ENCODE measurements at regions of chr16 and their contacts with region 1.

Region 1: DNA sequence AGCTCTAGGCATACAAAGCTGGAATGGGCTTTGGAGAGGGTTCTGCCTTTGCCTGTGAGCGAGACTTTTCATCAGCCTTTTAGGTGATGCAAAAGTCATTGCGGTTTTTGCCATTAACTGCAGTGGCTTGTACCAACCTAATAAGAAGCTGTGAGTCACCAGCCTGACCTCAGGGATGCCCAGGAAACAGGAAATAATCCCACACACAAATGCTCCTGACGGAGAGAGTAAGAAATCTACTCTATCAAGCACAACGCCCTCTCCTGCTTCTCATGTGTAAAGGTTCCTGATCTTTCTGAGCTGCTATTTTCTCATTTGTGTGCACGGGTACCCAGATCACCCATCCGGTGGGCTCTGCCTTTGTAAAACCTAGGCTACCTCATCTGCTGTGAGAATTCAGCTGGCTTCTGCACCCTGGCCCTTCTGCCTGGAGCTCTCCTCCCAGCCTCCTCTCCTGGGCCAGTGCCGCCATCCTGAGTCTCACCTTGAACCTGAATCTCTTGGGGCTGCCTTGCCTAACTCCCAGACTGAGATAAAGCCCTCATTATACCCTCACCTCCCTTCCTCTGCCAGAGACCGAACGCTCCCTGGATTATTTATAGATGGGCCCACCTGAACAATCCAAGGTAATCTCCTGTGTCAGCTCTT is 299.7 kb downstream of the C16orf95 start:
- DNase-seq: peak; percentile 71
- H3K4me3 ChIP-seq: no peak overlapping the region
- CTCF ChIP-seq: peak; percentile 63

Region 2: GRCh38 chr16:86806838-86807351 is 210.6 kb before region 1 on chr16:
- CTCF ChIA-PET with region 1: no interaction called
- POLR2A ChIA-PET with region 1: no interaction called
- DNase-seq: no peak
- H3K4me3 ChIP-seq: no peak overlapping the region
- CTCF ChIP-seq: no peak

Region 3: DNA sequence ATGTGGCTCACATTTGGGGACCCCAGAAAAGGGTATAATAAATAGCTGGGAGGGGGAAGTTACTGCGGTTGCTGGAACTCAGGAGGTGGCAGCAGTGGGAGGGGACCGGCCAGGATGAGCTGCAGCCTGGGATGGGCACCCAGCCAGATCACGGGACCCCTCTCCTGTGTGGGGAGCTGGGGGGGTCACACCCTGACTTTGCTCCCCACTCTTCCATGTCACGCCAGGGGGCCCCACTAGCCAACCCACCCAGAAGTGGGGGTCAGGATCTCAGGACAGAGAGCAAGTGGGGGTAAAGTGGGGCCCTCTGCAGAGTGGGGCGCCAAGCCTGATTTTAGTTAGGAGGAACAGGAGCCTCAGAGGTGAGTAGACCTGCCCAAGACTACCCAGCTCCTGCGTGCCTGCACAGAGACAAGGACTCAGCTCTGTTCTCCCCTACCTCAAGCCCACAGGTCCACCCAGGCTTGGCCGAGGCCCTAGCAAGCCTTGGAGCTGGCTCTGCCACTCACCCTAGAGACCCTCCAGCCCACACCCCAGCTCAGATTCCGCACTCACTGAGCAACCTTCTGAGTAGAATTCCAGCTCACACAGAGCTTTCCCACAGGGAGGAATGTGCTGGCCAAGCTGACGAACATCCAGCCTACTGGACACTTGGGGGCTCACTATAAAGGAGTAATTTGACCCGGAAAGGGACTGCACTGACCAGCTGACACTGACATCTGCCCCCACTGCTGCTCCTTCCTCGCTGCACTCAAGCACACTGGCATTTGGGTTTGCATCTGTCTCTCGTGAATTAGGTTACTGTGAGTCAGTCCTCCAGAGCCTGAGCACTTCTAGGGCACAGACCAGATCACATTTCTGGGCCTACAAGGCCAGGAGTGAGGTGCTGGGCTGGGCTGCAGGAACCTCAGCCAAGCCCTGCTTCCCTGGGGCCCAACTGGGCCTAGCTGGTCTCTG is 10.4 kb before region 1 on chr16:
- CTCF ChIA-PET with region 1: interaction called, 15 read pairs
- POLR2A ChIA-PET with region 1: no interaction called
- DNase-seq: no peak
- H3K4me3 ChIP-seq: no peak overlapping the region
- CTCF ChIP-seq: no peak

Region 4: DNA sequence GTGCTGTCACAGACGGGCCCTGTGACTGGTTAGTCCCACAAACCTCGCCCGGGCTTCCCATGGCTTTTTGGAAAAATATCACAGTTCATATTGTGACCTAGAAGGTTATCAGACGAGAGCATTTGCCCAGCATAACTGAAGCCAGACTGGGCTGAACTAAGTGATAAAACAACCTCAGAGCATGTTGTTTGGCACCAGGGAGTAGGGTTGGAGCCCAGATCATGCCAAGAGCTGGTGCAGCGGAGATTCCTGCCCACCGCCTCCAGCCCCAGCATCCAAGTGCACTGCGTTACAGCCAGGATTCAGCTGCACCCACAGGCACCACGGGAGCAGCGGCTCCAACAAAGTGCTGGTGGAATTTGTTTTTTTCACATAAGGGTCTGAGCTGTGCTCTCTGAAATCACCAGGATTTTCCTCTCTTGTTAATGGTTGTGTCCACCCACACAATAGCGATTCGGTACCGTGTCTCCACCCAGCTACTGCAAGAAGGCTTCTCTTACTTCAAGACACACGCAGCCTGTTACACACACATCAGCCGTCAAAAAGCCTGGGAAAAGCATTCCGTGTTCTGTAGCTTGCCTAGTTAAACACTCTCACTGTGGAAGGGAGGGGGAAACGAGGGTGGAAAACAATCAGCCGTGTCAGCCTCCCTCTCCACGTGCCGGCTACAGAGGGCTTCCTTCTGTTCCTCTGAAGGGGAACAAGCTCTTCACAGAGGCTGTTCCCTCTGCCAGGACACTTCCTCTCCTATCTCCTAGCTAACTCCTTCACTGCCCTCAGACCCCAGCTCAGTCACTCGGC is 25.9 kb after region 1 on chr16:
- CTCF ChIA-PET with region 1: interaction called, 11 read pairs
- POLR2A ChIA-PET with region 1: no interaction called
- DNase-seq: no peak
- H3K4me3 ChIP-seq: no peak overlapping the region
- CTCF ChIP-seq: no peak